GM12878 (cell line): ENCODE measurements at regions of chr6 and their contacts with region 1.

Region 1: DNA sequence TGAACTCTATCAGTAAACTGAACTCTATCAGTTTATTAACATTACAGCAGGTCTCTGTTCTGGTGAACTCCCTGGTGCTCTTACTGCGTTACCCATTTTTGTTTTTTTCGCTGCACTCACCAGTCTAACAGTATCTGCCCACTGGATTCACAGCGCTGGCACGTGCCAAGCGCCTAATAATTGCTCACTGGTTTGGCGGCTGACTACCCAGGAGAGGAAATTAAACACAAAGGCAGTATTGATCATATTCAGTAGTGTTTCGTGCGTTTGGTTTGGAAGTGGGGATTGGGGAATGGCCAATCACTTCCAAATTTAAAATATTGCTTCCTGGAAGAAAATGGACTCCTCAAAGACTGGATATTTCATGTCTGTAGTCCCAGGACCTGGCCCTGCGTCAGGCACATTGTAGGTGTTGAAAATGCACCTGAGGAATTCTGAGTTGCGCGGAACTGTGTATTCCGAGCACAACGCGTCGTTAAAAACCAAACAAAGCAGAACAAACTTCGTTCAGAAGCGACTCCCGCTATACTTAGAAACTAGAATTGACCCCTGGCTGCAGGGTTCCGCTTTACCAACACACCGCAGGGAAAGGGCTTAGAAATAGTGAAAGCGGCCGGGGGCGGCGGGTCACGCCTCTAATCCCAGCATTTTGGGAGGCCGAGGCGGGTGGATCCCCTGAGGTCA is 1.1 kb upstream of the RPS12 start:
- DNase-seq: no peak
- ATAC-seq: peak; percentile 52
- H3K4me3 ChIP-seq: peak overlapping the region; percentile 85
- H3K27ac ChIP-seq: peak overlapping the region; percentile 96
- H3K4me1 ChIP-seq: peaks cover 6% of the 10 kb centered on the region; the same call in 1 of the 2 replicates
- H3K27me3 ChIP-seq: peaks cover 0 to 5% of the 10 kb centered on the region in 2 experiments; a peak in 1 of 4 replicates
- CTCF ChIP-seq: no peak
- EP300 ChIP-seq: no peak
- POLR2A ChIP-seq: peak; percentile 23; the same call in 1 of the 2 replicates
- RAD21 ChIP-seq: no peak

Region 2: GRCh38 chr6:131976545-131977061 is 836.7 kb before region 1 on chr6:
- CTCF ChIA-PET with region 1: no interaction called
- POLR2A ChIA-PET with region 1: no interaction called
- RAD21 ChIA-PET with region 1: no interaction called
- SMC1A ChIA-PET with region 1: no interaction called
- in situ Hi-C with region 1: no loop called
- intact Hi-C with region 1: no loop called
- DNase-seq: no peak
- ATAC-seq: no peak
- H3K4me3 ChIP-seq: no peak overlapping the region
- H3K27ac ChIP-seq: no peak overlapping the region
- H3K4me1 ChIP-seq: no peaks in the 10 kb centered on the region
- H3K27me3 ChIP-seq: no peaks in the 10 kb centered on the region
- CTCF ChIP-seq: no peak
- EP300 ChIP-seq: no peak
- POLR2A ChIP-seq: no peak
- RAD21 ChIP-seq: no peak

Region 3: DNA sequence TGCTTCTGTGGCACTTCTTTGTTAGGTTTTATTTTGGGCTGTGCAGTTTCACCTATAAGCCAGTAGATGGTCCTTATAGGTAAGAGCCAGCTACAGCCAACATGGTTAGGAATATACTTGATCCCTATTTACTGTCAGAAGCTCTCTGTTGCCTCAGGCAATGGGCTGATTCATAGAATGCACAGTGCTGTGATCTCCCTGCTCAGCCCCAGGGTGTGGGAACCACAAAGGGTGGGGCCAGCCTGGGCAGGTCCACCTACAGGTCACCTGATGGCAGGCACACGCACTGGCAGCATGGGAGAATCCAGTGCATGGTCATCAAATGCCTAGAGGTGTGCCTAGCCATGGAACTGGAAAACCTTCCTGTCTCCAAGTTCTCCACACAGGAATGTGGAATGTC is 604.0 kb before region 1 on chr6:
- CTCF ChIA-PET with region 1: no interaction called
- POLR2A ChIA-PET with region 1: no interaction called
- RAD21 ChIA-PET with region 1: no interaction called
- SMC1A ChIA-PET with region 1: no interaction called
- in situ Hi-C with region 1: no loop called
- intact Hi-C with region 1: no loop called
- DNase-seq: no peak
- ATAC-seq: no peak
- H3K4me3 ChIP-seq: no peak overlapping the region
- H3K27ac ChIP-seq: no peak overlapping the region
- H3K4me1 ChIP-seq: no peaks in the 10 kb centered on the region
- H3K27me3 ChIP-seq: peaks cover 0 to 1% of the 10 kb centered on the region in 2 experiments; a peak in 3 of 4 replicates
- CTCF ChIP-seq: no peak
- EP300 ChIP-seq: no peak
- POLR2A ChIP-seq: no peak
- RAD21 ChIP-seq: no peak

Region 4: DNA sequence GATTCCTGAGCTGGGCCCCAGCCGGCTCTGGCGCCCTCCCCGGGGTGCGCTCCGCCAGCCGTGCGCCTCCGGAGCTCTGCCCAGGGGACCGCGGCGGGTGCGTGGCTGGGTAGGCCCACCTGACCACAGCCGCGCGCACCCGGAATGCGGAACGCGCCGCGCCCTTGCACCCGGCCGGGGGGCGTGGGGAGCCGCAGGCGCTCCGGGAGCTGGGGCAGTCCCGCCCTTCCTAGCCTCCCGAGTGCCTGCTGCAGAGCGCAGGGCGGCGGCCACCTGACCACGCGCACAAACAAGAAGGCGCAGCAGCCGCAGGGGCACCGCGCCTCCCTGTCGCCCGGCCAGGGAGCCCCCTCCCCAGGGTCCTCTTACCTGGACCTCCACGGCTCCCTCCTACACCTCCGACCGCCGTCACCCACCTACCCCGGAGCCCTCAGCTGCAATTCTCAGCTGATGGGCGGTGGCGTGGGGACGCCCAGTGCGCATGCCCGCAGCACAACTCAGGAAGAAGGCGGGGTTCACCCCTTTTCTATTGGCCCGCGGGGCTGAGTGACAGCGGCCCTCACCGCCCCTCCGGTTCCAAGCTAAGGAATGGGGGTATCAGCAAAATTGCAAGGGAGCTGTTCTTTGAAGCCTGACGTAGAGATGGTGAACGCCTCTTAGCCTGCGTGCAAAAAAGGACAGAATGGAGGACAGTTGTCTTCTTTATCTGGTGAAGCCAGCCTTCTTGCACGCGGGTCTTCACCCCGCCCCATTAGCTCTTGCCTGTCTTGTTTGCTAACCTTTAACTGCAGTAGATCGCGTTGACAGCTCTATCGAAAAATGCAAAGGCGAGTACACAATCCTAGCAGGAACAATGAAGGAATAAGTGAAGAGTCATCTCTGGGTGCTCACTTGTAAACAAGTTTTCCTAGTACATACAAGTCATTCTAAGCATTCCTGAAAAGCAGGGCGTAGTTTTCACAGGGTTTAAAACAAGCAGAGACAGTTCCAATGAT is 300.4 kb before region 1 on chr6 and contains the start of gene STX7:
- CTCF ChIA-PET with region 1: no interaction called
- POLR2A ChIA-PET with region 1: interaction called, 6 read pairs
- RAD21 ChIA-PET with region 1: interaction called, 4 read pairs
- SMC1A ChIA-PET with region 1: no interaction called
- in situ Hi-C with region 1: no loop called
- intact Hi-C with region 1: loop called (anchors 5 kb)
- DNase-seq: peak; percentile 48
- ATAC-seq: peak; percentile 91
- H3K4me3 ChIP-seq: peak within 1 kb of the TSS; percentile 61
- H3K27ac ChIP-seq: peak within 1 kb of the TSS; percentile 63
- H3K4me1 ChIP-seq: peaks cover 6% of the 10 kb centered on the region
- H3K27me3 ChIP-seq: no peaks in the 10 kb centered on the region
- CTCF ChIP-seq: no peak
- EP300 ChIP-seq: no peak
- POLR2A ChIP-seq: peak; percentile 77
- RAD21 ChIP-seq: no peak
- polyA plus RNA-seq, gene STX7: 26.5 to 30.7 TPM

Region 5: DNA sequence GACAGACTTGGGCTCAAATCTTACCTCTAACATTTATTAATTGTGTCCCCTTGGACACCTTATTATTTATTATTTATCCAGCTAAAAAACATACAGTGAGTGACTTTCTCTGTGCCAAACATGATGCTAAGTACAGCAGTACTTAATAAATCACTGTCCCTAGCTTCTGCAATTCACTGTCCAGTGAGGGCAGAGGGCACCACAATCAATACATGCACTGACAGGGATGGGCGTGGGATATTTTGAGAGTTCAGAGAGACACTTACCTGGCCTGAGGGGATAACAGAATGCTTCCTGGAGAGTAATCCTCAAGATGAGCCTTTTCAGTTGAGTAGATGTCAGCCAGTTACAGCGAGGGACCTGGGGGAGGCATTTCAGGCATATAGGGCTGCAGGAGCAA is 180.0 kb before region 1 on chr6:
- CTCF ChIA-PET with region 1: no interaction called
- POLR2A ChIA-PET with region 1: no interaction called
- RAD21 ChIA-PET with region 1: no interaction called
- SMC1A ChIA-PET with region 1: no interaction called
- in situ Hi-C with region 1: no loop called
- intact Hi-C with region 1: no loop called
- DNase-seq: no peak
- ATAC-seq: no peak
- H3K4me3 ChIP-seq: no peak overlapping the region
- H3K27ac ChIP-seq: no peak overlapping the region
- H3K4me1 ChIP-seq: no peaks in the 10 kb centered on the region
- H3K27me3 ChIP-seq: no peaks in the 10 kb centered on the region; a peak in 1 of 4 replicates
- CTCF ChIP-seq: no peak
- EP300 ChIP-seq: no peak
- POLR2A ChIP-seq: no peak
- RAD21 ChIP-seq: no peak